Activated CD4-positive, alpha-beta T cell treated with anti-CD3 and anti-CD28 coated beads for 36 hours (primary cell): ENCODE measurements at regions of chr12 and their contacts with region 1.

Region 1: GRCh38 chr12:3073438-3074250 is 3.5 kb upstream of the TSPAN9 start:
- DNase-seq: peak; percentile 91
- ATAC-seq: peak; percentile 70
- H3K4me3 Mint-ChIP-seq: no peak overlapping the region
- H3K27ac Mint-ChIP-seq: no peak overlapping the region
- H3K4me1 Mint-ChIP-seq: peaks cover 2% of the 10 kb centered on the region
- H3K27me3 Mint-ChIP-seq: peaks cover 2% of the 10 kb centered on the region

Region 2: GRCh38 chr12:2890388-2891239 is 183.0 kb before region 1 on chr12 and contains the start of gene TULP3:
- CTCF ChIA-PET with region 1: no interaction called
- POLR2A ChIA-PET with region 1: no interaction called
- intact Hi-C with region 1: loop called in 1 of 2 experiments (anchors 1 kb)
- DNase-seq: peak; percentile 98
- ATAC-seq: peak; percentile 98
- H3K4me3 Mint-ChIP-seq: peak within 1 kb of the TSS; percentile 85
- H3K27ac Mint-ChIP-seq: peak within 1 kb of the TSS; percentile 79
- H3K4me1 Mint-ChIP-seq: peaks cover 25% of the 10 kb centered on the region
- H3K27me3 Mint-ChIP-seq: no peaks in the 10 kb centered on the region
- total RNA-seq, gene TULP3: 5.9 to 7.3 TPM

Region 3: DNA sequence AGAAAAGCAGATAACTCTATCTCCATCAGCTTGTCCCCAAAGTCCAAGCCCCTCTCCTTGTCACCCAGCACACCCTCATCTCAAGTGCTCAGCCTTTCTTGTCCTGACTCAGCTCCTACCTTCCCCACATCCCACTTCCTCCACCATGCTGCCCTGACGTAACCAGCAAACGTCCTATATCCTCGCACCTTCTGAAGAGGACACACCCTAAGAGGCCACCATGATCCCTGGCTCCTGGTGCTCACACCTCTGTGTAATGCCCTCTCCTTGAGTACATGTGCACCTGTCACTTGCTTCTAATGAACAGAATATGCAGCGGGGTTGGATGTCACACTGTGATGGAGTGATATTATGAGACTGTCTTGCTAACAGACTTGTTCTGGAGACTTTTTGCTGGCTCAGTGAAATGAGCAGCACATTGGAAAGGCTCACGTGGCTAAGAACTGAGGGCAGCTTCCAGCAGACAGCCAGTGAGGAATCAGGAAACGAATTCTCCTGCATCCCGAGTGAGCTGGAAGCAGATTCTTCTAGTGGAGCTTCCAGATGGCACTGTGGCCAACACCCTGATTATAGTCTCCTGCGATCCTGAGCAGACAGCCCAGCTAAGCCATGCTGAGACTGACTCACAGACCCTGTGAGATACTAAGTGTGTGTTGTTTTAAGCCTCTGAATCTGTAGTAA is 12.7 kb before region 1 on chr12:
- CTCF ChIA-PET with region 1: interaction called, 20 read pairs
- POLR2A ChIA-PET with region 1: no interaction called
- intact Hi-C with region 1: no loop called
- DNase-seq: no peak
- ATAC-seq: no peak
- H3K4me3 Mint-ChIP-seq: no peak overlapping the region
- H3K27ac Mint-ChIP-seq: no peak overlapping the region
- H3K4me1 Mint-ChIP-seq: no peaks in the 10 kb centered on the region
- H3K27me3 Mint-ChIP-seq: peaks cover 30% of the 10 kb centered on the region

Region 4: GRCh38 chr12:3135522-3136461 is 62.1 kb after region 1 on chr12:
- CTCF ChIA-PET with region 1: interaction called, 5 read pairs
- POLR2A ChIA-PET with region 1: no interaction called
- intact Hi-C with region 1: loop called in 1 of 2 experiments (anchors 1 kb)
- DNase-seq: peak; percentile 55
- ATAC-seq: peak; percentile 85
- H3K4me3 Mint-ChIP-seq: no peak overlapping the region
- H3K27ac Mint-ChIP-seq: no peak overlapping the region
- H3K4me1 Mint-ChIP-seq: peaks cover 2% of the 10 kb centered on the region
- H3K27me3 Mint-ChIP-seq: peaks cover 26% of the 10 kb centered on the region

Region 5: GRCh38 chr12:3202734-3203446 is 129.2 kb after region 1 on chr12:
- CTCF ChIA-PET with region 1: interaction called, 6 read pairs
- POLR2A ChIA-PET with region 1: no interaction called
- intact Hi-C with region 1: loop called (anchors 1 to 5 kb)
- DNase-seq: peak; percentile 82
- ATAC-seq: peak; percentile 57
- H3K4me3 Mint-ChIP-seq: no peak overlapping the region
- H3K27ac Mint-ChIP-seq: no peak overlapping the region
- H3K4me1 Mint-ChIP-seq: peaks cover 9% of the 10 kb centered on the region
- H3K27me3 Mint-ChIP-seq: peaks cover 39% of the 10 kb centered on the region

Region 6: GRCh38 chr12:3752741-3753486 is 679.3 kb after region 1 on chr12 and contains the start of gene CRACR2A:
- CTCF ChIA-PET with region 1: no interaction called
- POLR2A ChIA-PET with region 1: no interaction called
- intact Hi-C with region 1: loop called in 1 of 2 experiments (anchors 5 kb)
- DNase-seq: peak; percentile 92
- ATAC-seq: peak; percentile 84
- H3K4me3 Mint-ChIP-seq: peak within 1 kb of the TSS; percentile 86
- H3K27ac Mint-ChIP-seq: peak within 1 kb of the TSS; percentile 96
- H3K4me1 Mint-ChIP-seq: peaks cover 52% of the 10 kb centered on the region
- H3K27me3 Mint-ChIP-seq: no peaks in the 10 kb centered on the region
- total RNA-seq, gene CRACR2A: 19.2 to 22.5 TPM